Posterior vena cava (tissue), 2 donors: ENCODE measurements at regions of chr6 and their contacts with region 1.

Region 1: GRCh38 chr6:90383196-90383822 is 86.7 kb upstream of the BACH2 start:
- DNase-seq: no peak

Region 2: GRCh38 chr6:89853068-89853467 is 530.2 kb before region 1 on chr6:
- intact Hi-C with region 1: no loop called
- DNase-seq: no peak

Region 3: DNA sequence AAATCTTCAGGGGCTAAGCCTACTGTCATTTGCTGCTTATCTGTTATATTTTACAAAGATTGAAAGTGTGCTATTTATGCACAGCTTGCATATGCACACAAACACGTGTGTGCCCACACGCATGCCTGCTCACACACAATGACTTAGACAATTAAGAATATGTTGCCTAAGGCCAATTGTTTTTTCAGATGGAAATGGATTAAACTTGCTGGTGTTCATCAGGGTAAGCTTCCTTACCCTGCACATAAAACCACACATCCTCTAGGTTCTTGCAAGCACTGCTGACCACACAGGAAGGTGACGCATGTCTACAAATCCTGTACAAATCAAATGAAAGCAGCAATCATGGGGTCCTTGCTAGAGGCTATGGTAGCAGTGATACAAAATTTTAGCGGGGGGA is 430.6 kb before region 1 on chr6:
- intact Hi-C with region 1: loop called in 1 of 2 experiments (anchors 10 kb)
- DNase-seq: no peak

Region 4: GRCh38 chr6:89970609-89971337 is 412.5 kb before region 1 on chr6:
- intact Hi-C with region 1: loop called in 1 of 2 experiments (anchors 10 kb)
- DNase-seq: no peak